ENCODE measurements at regions of chr1 and their contacts with region 1.

Region 1: DNA sequence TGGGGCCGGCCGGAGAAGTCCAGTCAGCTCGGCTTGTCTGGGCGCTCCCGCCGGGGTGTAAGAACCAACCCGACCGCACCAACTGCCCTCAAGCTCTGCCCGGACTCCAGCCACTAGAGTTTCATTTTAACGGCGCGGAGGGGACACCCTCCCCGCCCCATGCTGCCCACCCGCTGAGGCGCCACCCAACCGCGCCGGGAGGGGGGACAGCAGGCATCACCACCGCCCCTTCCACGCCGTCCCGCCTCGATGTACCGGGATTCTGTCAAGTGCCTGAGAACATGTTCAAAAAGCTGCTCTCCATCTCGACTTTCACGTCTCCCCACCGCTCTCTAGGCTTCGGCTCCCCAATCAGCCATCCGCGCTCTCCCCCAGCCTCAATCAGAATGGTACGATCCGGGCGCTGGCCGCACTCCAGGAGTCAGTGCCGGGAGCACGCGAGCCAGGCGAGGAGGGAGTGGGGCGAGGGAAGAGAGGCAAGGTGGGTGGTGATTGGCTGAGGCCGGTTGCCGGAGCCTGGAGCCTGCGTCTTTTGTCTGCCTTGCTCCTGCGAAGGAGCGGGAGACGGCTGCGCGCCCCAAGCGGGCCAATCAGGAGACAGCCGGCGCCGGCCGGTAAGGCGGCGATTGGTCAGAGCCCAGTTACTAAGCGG is at the start of gene PIK3R3:
- DNase-seq: peak; percentile 95 to 100 (median 98)

Region 2: DNA sequence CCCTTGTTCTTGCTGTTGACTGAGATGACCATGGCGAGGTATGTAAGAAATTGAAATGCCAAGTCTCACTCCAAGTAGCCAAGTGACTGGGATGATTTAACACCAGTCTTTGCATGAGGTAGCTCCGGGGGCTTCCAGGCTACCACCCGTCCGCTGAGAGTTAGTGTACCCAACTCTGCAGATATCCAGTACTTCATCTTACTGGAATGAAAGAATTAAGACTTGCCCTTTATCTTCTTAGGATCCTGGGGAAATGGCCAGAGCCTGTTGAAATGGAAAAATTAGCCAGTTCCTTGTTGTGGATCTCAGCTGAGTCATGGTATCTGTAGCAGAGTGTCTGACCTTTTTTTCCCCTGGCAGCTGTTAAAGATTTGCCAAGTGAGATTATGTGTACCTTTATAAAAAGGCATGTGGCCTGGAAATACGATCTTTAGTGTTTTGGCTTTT is 178.2 kb before region 1 on chr1:
- intact Hi-C with region 1: no loop called
- DNase-seq: no peak

Region 3: DNA sequence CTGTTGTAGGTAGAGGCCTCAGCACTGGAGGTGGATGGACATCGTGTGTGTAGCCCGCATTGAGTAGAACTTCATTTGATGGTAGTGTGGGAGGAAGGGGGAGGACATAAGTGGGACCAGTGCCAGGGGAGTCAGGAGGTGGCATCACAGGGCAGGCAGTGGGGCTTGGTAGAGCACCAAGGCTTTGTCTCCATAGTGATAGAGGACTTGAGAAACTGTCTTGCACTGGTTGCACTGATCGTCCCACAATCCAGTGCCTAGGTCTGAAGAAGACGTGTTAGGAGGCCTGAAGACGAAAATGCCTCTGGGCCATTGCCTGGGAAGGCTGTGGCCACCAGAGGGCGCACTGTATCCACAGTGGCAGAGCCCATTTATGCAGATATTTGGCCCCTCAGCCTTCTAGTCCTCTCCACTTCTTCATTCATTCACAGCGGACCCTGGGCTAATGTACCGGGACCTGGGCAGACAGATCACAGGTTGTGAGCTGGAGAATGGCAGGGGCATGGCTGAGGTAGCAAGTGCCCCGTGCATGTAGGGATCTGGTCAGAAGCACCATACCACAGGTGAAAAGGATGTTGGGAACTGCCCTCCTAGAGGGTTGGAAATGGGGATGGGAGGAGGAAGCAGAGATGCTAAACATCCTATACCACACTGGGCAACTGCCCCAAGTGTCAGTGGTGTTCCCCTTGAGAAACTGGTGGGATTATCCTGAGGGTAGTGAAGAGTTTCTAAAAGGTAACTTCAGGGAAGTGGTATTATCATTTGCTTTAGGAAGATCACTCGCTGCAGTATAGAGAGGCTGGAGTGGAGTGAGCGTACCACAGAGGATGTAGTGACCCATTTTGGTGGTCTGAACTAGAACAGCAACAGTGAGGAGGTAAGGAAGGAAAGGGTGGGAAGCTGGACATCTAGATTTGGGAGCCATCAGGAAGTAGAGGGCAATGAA is 95.5 kb before region 1 on chr1:
- intact Hi-C with region 1: loop called (anchors 5 kb)
- DNase-seq: peak; percentile 74 to 98 (median 90)

Region 4: GRCh38 chr1:46179138-46180081 is 46.8 kb after region 1 on chr1:
- intact Hi-C with region 1: loop called (anchors 5 kb)
- DNase-seq: peak in 9 of 10 donors; percentile 43 to 96 (median 84)

Measured in posterior cingulate gyrus (tissue), 11 donors.